H1 (cell line): ENCODE measurements at regions of chr1 and their contacts with region 1.

Region 1: GRCh38 chr1:225318706-225319575 is 108.9 kb downstream of the LBR start:
- DNase-seq: no peak
- H3K4me3 ChIP-seq: no peak overlapping the region
- H3K27ac ChIP-seq: no peak overlapping the region
- H3K4me1 ChIP-seq: no peaks in the 10 kb centered on the region; a peak in 2 of 7 replicates
- H3K27me3 ChIP-seq: no peaks in the 10 kb centered on the region
- CTCF ChIP-seq: peak; percentile 65 to 87 (median 70)
- EP300 ChIP-seq: no peak
- POLR2A ChIP-seq: no peak
- RAD21 ChIP-seq: peak; percentile 82 to 85

Region 2: DNA sequence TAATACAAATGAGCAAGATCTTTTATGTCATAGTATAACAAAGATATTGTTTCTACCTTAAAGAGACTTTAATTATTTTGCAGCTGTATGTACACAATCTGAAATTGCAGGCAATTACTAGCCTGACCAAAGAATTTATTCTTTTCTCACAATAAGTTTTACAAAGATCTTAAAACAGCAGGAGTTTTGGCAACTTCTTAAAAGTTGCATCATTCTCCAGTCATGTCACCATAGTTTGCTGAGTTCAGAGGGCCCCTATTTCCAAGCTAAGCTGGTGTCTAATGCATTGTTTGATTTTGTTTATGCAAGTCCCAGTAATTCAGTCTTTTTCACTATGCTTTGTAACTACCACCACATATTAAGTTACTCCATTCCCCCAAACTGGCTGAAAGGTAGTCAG is 274.7 kb before region 1 on chr1:
- CTCF ChIA-PET with region 1: no interaction called
- POLR2A ChIA-PET with region 1: no interaction called
- DNase-seq: no peak
- H3K4me3 ChIP-seq: no peak overlapping the region
- H3K27ac ChIP-seq: no peak overlapping the region
- H3K4me1 ChIP-seq: no peaks in the 10 kb centered on the region
- H3K27me3 ChIP-seq: no peaks in the 10 kb centered on the region
- CTCF ChIP-seq: no peak
- EP300 ChIP-seq: no peak
- POLR2A ChIP-seq: no peak
- RAD21 ChIP-seq: no peak

Region 3: DNA sequence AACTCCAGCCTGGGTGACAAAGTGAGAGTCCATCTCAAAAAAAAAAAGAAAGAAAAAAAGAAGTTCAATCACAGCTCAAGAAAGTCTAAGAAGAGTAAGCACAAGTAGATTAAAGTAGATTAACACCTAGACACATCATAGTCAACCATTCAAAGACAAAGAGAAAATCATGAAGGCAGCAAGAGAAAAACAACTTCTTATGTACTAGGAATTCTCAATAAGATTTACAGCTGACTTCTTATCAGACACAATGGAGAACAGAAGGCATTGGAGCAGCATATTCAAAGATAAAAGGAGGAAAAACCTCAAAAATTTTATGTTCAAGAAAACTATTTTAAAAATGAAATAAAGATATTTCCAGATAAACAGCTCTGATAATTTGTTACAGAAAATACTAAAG is 38.4 kb before region 1 on chr1:
- CTCF ChIA-PET with region 1: no interaction called
- POLR2A ChIA-PET with region 1: no interaction called
- DNase-seq: no peak
- H3K4me3 ChIP-seq: no peak overlapping the region
- H3K27ac ChIP-seq: no peak overlapping the region
- H3K4me1 ChIP-seq: no peaks in the 10 kb centered on the region
- H3K27me3 ChIP-seq: no peaks in the 10 kb centered on the region
- CTCF ChIP-seq: no peak
- EP300 ChIP-seq: no peak
- POLR2A ChIP-seq: no peak
- RAD21 ChIP-seq: no peak

Region 4: GRCh38 chr1:225304996-225305395 is 13.9 kb before region 1 on chr1:
- CTCF ChIA-PET with region 1: interaction called, 36 read pairs
- POLR2A ChIA-PET with region 1: no interaction called
- DNase-seq: no peak
- H3K4me3 ChIP-seq: no peak overlapping the region
- H3K27ac ChIP-seq: no peak overlapping the region
- H3K4me1 ChIP-seq: no peaks in the 10 kb centered on the region
- H3K27me3 ChIP-seq: no peaks in the 10 kb centered on the region
- CTCF ChIP-seq: no peak
- EP300 ChIP-seq: no peak
- POLR2A ChIP-seq: no peak
- RAD21 ChIP-seq: no peak

Region 5: GRCh38 chr1:225342695-225343094 is 23.8 kb after region 1 on chr1:
- CTCF ChIA-PET with region 1: interaction called, 13 read pairs
- POLR2A ChIA-PET with region 1: no interaction called
- DNase-seq: no peak
- H3K4me3 ChIP-seq: no peak overlapping the region
- H3K27ac ChIP-seq: no peak overlapping the region
- H3K4me1 ChIP-seq: no peaks in the 10 kb centered on the region
- H3K27me3 ChIP-seq: no peaks in the 10 kb centered on the region
- CTCF ChIP-seq: peak in 1 of 3 experiments; percentile 15; a peak in 1 of 4 replicates
- EP300 ChIP-seq: no peak
- POLR2A ChIP-seq: no peak
- RAD21 ChIP-seq: no peak; a peak in 1 of 4 replicates

Region 6: DNA sequence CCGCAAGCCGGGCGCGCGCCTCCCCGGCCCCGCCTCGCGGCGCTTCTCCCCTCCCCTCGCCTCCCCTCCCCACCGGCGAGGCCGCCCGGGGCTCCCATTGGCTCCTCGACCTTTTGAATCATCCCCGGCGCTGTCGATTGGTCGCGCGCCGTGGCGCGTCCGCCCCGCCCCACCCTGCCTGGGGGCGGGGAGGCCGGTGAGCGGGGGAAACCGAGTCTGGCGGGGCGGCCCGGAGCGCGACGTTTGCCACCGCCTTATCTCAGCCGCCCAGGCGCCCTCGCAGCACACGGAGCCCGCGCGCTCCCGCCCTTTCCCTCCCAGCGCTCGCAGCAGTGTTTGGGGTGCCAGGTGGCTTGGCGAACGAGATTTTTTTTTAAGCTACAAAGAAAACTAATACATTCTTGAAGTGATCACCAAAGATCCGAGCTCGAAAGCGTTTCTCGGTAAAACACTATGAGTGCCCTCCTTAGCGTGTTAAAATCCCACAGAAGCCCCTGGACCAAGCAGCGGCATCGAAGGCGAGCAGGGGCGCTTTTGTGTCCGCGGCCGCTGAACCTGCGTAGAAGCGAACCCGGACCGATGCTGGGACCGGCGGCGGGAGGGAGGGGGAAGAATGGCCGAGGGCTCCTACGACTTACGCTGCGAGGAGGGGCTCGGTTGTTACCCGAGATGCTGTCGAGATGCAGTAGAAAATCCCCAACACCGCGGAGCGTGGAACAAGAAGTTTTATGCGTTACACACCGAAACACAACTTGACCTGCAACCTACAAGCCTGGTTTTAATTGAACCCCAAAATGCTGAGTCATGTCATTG is 109.3 kb after region 1 on chr1:
- CTCF ChIA-PET with region 1: interaction called, 10 read pairs
- POLR2A ChIA-PET with region 1: no interaction called
- DNase-seq: peak; percentile 54 to 92
- H3K4me3 ChIP-seq: peak overlapping the region; percentile 63 to 91 (median 84)
- H3K27ac ChIP-seq: peak overlapping the region; percentile 70; the same call in 1 of the 2 replicates
- H3K4me1 ChIP-seq: peaks cover 3 to 13% (median 12%) of the 10 kb centered on the region in 4 experiments
- H3K27me3 ChIP-seq: peaks cover 0 to 3% (median 1%) of the 10 kb centered on the region in 4 experiments; a peak in 2 of 7 replicates
- CTCF ChIP-seq: no peak
- EP300 ChIP-seq: no peak
- POLR2A ChIP-seq: peak; percentile 65 to 76
- RAD21 ChIP-seq: no peak

Region 7: DNA sequence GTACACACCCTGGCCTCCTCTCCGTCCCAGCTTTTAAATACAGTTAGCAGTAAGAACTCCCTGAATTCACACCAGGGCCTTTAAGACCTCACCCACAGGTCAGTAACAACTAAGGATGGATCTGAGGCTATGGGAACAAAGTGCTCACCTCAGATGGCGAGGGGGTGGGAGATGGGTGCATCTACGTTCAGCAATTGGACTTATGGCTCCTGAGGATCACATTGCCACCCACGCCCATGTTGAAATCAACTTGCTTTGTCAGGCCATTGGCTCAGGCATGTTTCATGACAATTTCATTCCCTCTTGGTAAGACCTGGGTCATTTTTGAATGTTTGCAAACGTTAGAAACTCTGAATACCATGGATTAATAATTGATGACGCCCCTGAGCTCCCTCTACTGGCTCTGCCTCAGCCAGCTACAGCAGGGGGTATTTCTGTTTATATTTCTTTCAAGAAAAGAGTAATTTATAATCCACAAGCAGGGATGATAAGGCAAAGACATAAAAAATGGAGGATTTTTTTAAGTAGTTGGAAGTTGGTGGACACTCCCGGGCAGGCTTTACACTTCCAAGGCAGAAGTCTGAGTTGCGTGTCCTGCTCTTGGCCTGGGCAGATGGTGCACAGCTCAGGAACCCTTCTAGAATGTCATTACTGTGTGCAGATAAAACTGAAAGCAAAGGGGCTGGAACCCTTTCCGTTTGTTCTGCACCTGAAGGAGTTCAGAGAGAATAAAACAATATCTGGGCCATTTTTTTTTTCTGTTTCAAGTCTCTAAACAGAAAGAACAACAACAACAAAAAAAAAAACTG is 122.6 kb after region 1 on chr1:
- CTCF ChIA-PET with region 1: interaction called, 11 read pairs
- POLR2A ChIA-PET with region 1: no interaction called
- DNase-seq: no peak
- H3K4me3 ChIP-seq: no peak overlapping the region
- H3K27ac ChIP-seq: no peak overlapping the region
- H3K4me1 ChIP-seq: peaks cover 0 to 5% (median under 1%) of the 10 kb centered on the region in 4 experiments; a peak in 1 of 7 replicates
- H3K27me3 ChIP-seq: no peaks in the 10 kb centered on the region; a peak in 1 of 7 replicates
- CTCF ChIP-seq: peak in 1 of 3 experiments; percentile 7; a peak in 1 of 4 replicates
- EP300 ChIP-seq: no peak
- POLR2A ChIP-seq: no peak
- RAD21 ChIP-seq: no peak